Activated CD4-positive, alpha-beta T cell treated with anti-CD3 and anti-CD28 coated beads, Interleukin-2, amount 10 ng/mL, durations not matched to agents 24 days and 14 days (primary cell): ENCODE measurements at regions of chr9 and their contacts with region 1.

Region 1: GRCh38 chr9:83334320-83334719 is 203.9 kb downstream of the FRMD3 start:
- DNase-seq: peak; percentile 91
- H3K4me3 Mint-ChIP-seq: no peak overlapping the region
- H3K27ac Mint-ChIP-seq: no peak overlapping the region
- H3K4me1 Mint-ChIP-seq: no peaks in the 10 kb centered on the region
- H3K27me3 Mint-ChIP-seq: no peaks in the 10 kb centered on the region

Region 2: GRCh38 chr9:83372957-83373356 is 38.6 kb after region 1 on chr9:
- intact Hi-C with region 1: no loop called
- DNase-seq: no peak
- H3K4me3 Mint-ChIP-seq: no peak overlapping the region
- H3K27ac Mint-ChIP-seq: no peak overlapping the region
- H3K4me1 Mint-ChIP-seq: no peaks in the 10 kb centered on the region
- H3K27me3 Mint-ChIP-seq: no peaks in the 10 kb centered on the region

Region 3: GRCh38 chr9:83544002-83544698 is 209.8 kb after region 1 on chr9:
- intact Hi-C with region 1: loop called (anchors 1 kb)
- DNase-seq: peak; percentile 64
- H3K4me3 Mint-ChIP-seq: no peak overlapping the region
- H3K27ac Mint-ChIP-seq: no peak overlapping the region
- H3K4me1 Mint-ChIP-seq: no peaks in the 10 kb centered on the region
- H3K27me3 Mint-ChIP-seq: peaks cover 20% of the 10 kb centered on the region

Region 4: DNA sequence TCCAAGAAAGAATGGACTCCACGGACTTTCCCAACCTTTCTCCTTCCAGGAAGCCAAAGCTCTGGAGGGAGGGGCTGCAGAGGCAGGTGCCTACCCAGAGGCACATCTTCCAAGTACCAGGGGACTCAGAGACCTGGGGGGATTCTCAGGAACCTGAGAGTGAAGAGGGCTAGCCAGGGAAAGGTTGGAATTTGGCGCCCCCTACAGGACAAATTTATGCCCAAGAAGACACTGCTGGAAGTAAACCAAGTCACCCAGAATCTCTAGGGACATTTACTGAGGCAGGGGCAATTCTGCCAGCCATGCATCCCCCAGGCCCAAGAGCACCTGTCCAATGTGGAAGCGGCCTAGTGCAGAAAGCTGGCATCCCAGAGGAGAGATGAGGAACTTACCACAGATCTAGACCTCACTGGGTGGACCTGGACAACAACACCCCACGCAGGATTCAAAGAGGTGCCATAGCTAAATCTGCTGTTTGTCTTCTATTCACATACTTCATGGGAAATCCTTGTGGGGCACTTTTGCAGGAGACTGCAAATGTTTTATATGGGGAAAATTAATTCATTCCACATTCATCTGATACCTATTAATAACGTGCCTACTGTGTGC is 262.7 kb after region 1 on chr9:
- intact Hi-C with region 1: loop called (anchors 1 kb)
- DNase-seq: peak; percentile 81
- H3K4me3 Mint-ChIP-seq: no peak overlapping the region
- H3K27ac Mint-ChIP-seq: no peak overlapping the region
- H3K4me1 Mint-ChIP-seq: no peaks in the 10 kb centered on the region
- H3K27me3 Mint-ChIP-seq: no peaks in the 10 kb centered on the region